Left ventricle myocardium superior (tissue), 1 donor: ENCODE measurements at regions of chr15 and their contacts with region 1.

Region 1: DNA sequence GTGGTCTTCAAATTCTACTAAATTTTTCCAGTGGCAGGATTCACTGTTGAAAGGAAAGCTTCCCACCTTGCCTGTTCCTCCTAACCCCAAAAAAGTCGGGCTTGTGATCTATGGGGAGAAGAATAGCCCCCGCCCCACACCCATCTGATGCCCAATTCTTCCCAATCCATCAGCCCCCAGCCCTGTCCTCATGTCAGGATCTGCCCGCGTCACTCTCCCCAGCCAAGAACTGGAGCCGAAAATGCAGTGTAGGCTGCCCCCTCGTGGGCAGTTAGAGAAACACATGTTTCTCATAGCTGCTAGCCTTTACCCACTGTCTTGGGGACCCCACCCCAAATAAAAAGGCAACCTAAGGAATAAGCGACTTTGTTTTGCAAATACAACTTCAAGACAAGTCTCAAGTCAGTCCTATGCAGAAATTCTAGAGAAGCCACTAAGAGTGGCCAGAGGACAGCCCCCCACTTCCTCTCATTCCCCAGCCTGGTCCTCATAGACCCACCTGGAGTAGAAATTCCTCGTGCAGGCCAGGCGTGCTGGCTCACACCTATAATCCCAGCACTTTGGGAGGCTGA is 13.0 kb upstream of the CSK start:
- DNase-seq: peak; percentile 70
- ATAC-seq: peak; percentile 54

Region 2: GRCh38 chr15:74460871-74461846 is 307.7 kb before region 1 on chr15 and contains the start of gene UBL7:
- intact Hi-C with region 1: no loop called
- DNase-seq: peak; percentile 97
- ATAC-seq: peak; percentile 99
- total RNA-seq, gene UBL7: 55.1 TPM

Region 3: GRCh38 chr15:74835307-74835823 is 66.5 kb after region 1 on chr15:
- intact Hi-C with region 1: no loop called
- DNase-seq: peak; percentile 76
- ATAC-seq: peak; percentile 49

Region 4: GRCh38 chr15:74950078-74951000 is 181.5 kb after region 1 on chr15:
- intact Hi-C with region 1: loop called (anchors 5 kb)
- DNase-seq: peak; percentile 46
- ATAC-seq: peak; percentile 74